Thyroid gland (tissue), 4 donors: ENCODE measurements at regions of chr1 and their contacts with region 1.

Region 1: GRCh38 chr1:201649761-201650622 is 111.1 kb downstream of the NAV1 start:
- DNase-seq: peak; percentile 96 to 97
- H3K4me3 ChIP-seq: peak overlapping the region; percentile 38 to 85 (median 58)
- H3K27ac ChIP-seq: peak overlapping the region; percentile 81 to 96 (median 94)
- H3K4me1 ChIP-seq: peaks cover 37 to 45% of the 10 kb centered on the region in 2 donors
- H3K27me3 ChIP-seq: no peaks in the 10 kb centered on the region
- CTCF ChIP-seq: peak in 1 of 6 experiments; percentile 14
- POLR2A ChIP-seq: peak; percentile 80 to 88

Region 2: DNA sequence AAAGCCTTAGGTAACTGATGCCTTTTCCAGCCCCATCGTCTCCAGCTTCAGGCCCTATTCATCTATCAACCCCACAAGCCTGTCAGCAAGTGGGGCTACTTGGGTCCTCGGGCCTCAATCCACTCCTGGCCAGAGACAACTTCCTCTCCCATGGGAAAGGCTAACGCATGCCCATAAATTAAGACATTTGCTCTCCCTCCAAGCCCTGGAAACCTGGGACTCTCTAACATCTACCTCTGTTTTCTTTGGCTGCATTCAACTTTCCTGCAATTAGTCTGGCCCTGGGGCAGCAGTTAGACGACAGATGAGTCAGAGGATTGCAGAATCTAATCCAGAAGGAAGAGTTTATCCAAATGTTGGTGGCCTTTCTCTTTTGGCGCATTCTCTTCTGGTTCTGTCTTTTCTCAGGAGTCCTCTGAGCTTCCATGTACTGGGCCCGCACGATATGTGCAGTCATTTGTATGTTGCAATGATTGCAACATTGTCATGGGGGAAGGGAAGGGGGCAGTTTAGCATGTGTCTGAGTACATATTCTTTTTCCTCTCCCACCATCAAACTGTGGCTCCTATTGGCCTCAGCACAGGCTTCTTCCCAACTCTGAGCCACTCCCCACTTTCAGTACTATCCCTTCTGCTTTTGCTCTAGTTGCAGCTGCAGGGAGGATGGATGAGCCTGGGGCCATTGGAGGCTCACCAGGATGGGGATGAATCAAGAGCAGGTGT is 56.6 kb before region 1 on chr1:
- intact Hi-C with region 1: loop called (anchors 5 kb)
- DNase-seq: no peak
- H3K4me3 ChIP-seq: no peak overlapping the region
- H3K27ac ChIP-seq: no peak overlapping the region
- H3K4me1 ChIP-seq: peaks cover 9 to 35% of the 10 kb centered on the region in 2 donors
- H3K27me3 ChIP-seq: no peaks in the 10 kb centered on the region
- CTCF ChIP-seq: no peak
- POLR2A ChIP-seq: no peak

Region 3: DNA sequence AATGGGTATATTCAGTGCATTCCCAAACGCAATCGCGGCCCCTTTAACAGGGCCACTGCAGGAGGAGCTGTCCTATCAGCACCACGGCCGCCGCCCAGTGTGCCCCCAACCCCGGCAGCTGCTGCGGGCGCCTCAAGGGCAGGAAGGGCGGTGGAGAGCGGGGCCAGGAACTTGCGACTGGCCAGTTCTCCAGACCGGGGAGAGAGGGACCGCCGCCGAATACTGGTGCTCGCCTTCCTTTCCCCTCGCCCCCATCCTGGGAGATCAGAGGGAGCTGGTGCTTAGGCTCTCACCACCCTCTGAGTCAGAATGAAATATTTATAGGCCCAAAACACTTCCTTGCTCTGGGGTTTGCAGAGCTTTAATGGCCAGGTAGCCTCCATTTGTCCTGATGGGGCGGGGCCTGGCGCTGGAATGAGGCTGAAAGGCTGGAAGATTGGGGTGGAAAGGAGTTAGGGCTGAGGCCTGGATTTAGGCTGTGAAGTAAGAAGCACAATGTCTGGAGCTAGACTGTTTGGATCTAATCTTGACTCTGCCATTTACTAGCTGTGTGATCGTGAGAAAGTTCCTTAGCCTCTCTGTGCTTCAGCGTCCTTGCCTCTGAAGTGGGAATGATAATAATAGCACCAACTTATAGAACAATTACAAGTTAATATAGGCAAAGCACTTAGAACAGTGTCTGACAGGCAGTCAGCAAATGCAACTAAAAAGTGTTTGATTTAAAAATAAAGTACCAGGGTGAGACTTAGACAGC is 35.6 kb before region 1 on chr1:
- intact Hi-C with region 1: loop called (anchors 5 kb)
- DNase-seq: peak; percentile 53 to 64
- H3K4me3 ChIP-seq: no peak overlapping the region
- H3K27ac ChIP-seq: no peak overlapping the region
- H3K4me1 ChIP-seq: peaks cover 0 to 23% of the 10 kb centered on the region in 2 donors
- H3K27me3 ChIP-seq: no peaks in the 10 kb centered on the region
- CTCF ChIP-seq: no peak
- POLR2A ChIP-seq: no peak

Region 4: DNA sequence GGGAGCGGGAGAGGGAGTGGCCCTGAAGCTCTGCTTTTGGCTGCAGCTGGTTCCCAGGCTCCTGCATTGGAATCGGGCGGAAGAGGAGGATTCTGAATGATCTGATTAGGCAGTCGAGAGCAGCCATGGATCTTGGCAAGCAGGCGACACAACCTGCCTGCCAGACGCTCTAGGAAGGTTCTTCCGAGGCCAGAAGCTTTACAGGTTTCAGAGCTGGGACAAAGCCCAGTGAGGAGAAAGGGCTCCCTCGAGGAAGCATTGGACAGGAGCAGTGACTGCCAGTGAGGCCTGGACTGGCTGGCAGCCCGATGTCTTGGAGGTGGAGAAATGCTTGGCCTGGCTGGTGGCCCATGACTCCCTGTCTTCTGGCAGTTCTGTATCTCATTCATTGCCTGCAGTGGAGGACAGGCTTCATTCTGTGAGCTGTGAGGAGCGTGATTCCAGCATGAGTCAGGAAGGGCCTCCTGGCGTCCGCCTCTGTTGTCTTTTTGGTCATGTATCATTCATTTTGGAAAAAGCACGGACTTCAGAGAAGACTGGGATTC is 46.3 kb after region 1 on chr1:
- intact Hi-C with region 1: no loop called
- DNase-seq: peak; percentile 97 to 98
- H3K4me3 ChIP-seq: no peak overlapping the region
- H3K27ac ChIP-seq: peak overlapping the region; percentile 74 to 82 (median 78)
- H3K4me1 ChIP-seq: peaks cover 8 to 53% of the 10 kb centered on the region in 2 donors
- H3K27me3 ChIP-seq: no peaks in the 10 kb centered on the region
- CTCF ChIP-seq: peak in 2 of 6 experiments; percentile 10 to 11
- POLR2A ChIP-seq: peak in 1 of 2 donors; percentile 54

Region 5: GRCh38 chr1:201828820-201829774 is 179.1 kb after region 1 on chr1 and contains the start of gene IPO9:
- intact Hi-C with region 1: no loop called
- DNase-seq: peak; percentile 95 to 96
- H3K4me3 ChIP-seq: peak within 1 kb of the TSS; percentile 26 to 86 (median 52)
- H3K27ac ChIP-seq: peak within 1 kb of the TSS; percentile 46 to 86 (median 78)
- H3K4me1 ChIP-seq: peaks cover 28 to 38% of the 10 kb centered on the region in 2 donors
- H3K27me3 ChIP-seq: no peaks in the 10 kb centered on the region
- CTCF ChIP-seq: peak; percentile 82 to 97 (median 94)
- POLR2A ChIP-seq: peak in 1 of 2 donors; percentile 84
- total RNA-seq, gene IPO9: 28.4 to 42.1 (median 36.7) TPM